ENCODE measurements at regions of chr5 and their contacts with region 1.

Region 1: GRCh38 chr5:132883261-132883834 is 9.9 kb downstream of the LEAP2 start:
- DNase-seq: peak; percentile 39
- H3K4me3 Mint-ChIP-seq: no peak overlapping the region
- H3K27ac Mint-ChIP-seq: no peak overlapping the region
- H3K4me1 Mint-ChIP-seq: peaks cover 2% of the 10 kb centered on the region
- H3K27me3 Mint-ChIP-seq: no peaks in the 10 kb centered on the region

Region 2: DNA sequence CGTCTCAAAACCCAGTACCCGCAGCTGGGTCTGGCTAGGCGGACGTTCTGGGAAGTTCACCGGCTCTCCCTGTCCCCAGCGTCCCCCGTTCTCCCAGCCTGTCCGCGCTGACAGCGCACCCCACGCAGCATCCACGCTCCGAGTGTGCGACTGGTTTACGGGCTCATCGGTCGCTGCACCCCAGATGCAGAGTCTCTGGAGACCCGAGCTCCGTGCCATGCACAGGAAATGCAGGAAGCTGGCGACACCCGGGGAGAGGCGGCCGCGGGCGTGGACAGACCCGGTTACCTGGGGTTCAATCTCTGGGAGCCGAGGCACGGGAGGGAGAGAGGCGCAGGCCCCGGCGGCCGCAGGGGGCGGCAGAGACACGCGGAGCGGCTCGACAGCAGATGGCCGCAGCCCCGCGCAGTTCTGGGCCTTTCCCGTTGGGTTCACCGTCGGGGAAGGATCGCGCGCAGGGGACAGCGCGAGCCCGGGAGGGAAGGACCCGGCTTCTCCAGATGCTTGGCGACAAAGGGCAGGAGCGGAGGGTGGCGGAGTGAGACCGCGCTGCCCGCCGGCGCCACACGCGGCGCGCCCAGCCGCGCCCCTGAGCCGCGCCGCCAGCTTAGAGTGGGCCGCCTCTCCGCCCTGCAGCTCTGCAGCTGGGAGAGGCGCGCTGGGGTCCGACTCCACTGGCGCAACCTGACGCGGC is 53.5 kb before region 1 on chr5:
- CTCF ChIA-PET with region 1: interaction called, 12 read pairs
- intact Hi-C with region 1: loop called (anchors 1 kb)
- DNase-seq: peak; percentile 79
- H3K4me3 Mint-ChIP-seq: peak overlapping the region; percentile 79
- H3K27ac Mint-ChIP-seq: no peak overlapping the region
- H3K4me1 Mint-ChIP-seq: peaks cover 4% of the 10 kb centered on the region
- H3K27me3 Mint-ChIP-seq: peaks cover 50% of the 10 kb centered on the region

Measured in activated naive CD4-positive, alpha-beta T cell treated with anti-CD3 and anti-CD28 coated beads for 36 hours (primary cell).